Left cardiac atrium (tissue), 4 donors: ENCODE measurements at regions of chr6 and their contacts with region 1.

Region 1: DNA sequence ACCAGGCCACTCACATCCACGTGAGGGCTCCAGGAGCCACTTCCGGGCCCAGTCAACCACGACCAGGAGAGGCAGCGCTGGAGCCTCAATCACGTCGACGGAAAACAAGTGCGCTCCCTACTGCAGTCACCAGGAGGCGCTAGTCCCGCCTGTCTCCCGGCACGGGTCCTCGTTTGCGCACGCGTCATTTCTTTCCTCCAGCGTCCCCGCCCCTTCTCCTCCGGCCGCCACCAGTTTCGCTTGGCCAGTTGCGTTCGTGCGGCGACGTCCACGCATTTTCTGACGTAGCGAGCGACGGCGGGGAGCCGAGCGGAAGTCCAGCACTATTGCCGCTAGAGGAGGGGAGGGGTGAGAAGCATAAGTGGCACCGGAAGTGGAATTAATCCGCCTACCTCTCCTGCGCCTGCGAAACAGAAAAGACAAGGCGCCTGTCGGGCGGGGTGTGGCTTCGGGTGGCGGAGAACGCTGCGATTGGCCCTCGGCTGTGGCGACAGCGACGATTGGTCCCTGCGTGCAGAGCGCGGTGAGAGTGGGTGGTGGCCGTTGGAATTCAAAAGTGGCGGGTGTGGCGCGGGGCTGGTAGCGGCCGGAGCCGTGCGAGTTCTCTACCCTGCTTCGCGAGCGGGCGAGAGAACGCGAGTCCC is at the start of gene KIFC1:
- DNase-seq: peak; percentile 99
- ATAC-seq: peak; percentile 99
- total RNA-seq, gene KIFC1: 0.31 to 1.9 TPM

Region 2: DNA sequence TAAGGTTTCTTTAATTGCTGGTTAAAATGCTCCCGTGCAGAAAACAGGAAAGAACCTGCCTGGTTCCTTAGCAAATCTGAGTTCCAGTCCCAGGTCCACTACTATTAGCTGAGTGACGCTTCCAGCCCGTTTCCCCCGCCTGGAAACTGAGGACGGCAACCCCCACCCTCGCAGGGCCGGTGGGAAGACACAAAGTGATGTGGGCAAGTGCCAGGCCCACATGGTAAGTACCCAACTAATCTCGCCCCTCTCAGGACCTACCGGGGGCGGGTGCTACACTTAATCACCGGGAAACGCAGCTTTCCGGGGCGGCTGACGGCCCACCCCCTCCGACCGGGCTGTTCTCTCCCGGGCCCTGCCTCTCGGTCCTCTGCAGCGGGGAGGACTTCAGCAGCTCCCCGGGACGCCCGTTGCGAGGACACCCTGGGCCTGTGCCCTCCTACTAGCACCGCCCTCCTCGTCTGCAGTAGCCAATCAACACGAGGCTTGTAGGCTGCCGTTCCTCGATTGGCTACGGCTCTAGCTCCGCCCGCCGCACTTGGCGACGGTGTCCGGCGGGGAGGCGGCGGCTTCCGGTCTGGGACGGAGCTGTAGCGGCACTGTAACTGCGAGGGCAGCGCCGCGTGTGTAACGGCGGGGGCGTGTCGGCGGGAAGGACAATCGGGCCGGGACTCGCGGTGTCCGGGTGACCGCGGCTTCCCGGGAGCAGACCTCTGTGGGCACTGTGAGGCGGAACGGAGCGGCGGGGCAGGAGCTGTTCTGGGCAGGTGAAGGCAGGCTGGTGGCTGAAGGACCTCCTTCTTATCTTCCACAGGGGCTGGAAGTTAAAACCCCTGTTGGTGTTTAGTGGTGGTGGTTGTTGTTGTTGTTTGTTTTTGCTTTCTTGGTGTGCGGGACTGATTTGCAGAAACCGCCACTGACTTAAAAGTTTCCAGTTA is 62.9 kb after region 1 on chr6 and contains the start of gene ZBTB9:
- intact Hi-C with region 1: loop called in 1 of 2 experiments (anchors 10 kb)
- DNase-seq: peak; percentile 97
- ATAC-seq: peak; percentile 98 to 99
- total RNA-seq, gene ZBTB9: 4.4 to 5.9 TPM

Region 3: DNA sequence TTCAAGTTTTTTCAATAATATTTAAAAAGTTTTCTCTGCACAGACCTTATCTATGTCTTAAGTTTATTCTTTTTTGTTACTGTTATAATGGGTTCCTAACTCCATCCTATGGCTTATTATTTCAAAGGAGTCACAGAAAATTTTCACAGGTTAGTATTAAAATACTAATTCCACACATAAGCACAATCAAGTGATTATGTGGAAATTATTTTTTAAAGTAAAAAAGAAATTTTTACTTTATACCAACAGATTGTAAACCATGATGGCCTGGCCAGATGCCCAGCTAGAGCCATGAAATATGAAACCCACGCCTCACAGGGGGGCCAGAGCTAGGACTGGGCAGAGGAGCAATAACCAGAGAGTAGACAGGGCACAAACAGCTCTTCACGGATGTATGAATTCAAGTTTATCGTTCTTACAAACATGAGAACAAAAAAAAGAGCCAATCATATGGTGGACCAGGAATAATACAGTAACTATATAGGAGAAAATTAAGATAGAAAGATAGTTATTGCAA is 967.0 kb after region 1 on chr6:
- intact Hi-C with region 1: no loop called
- DNase-seq: no peak
- ATAC-seq: peak in 1 of 2 donors; percentile 41